ENCODE measurements at regions of chr4 and their contacts with region 1.

Region 1: GRCh38 chr4:86934771-86935565 is at the start of gene AFF1:
- DNase-seq: peak; percentile 95
- ATAC-seq: peak; percentile 68
- H3K4me3 ChIP-seq: peak within 1 kb of the TSS; percentile 73 to 92 (median 83)
- H3K4me3 Mint-ChIP-seq: peak within 1 kb of the TSS; percentile 91
- H3K27ac ChIP-seq: peak within 1 kb of the TSS; percentile 79 to 86
- H3K27ac Mint-ChIP-seq: peak within 1 kb of the TSS; percentile 95
- H3K4me1 ChIP-seq: peaks cover 43 to 50% of the 10 kb centered on the region in 2 donors
- H3K4me1 Mint-ChIP-seq: peaks cover 44% of the 10 kb centered on the region
- H3K27me3 ChIP-seq: no peaks in the 10 kb centered on the region
- H3K27me3 Mint-ChIP-seq: no peaks in the 10 kb centered on the region
- CTCF ChIP-seq: no peak
- total RNA-seq, gene AFF1: 135 and 145 TPM in 2 replicates

Region 2: GRCh38 chr4:86918539-86919072 is 16.4 kb before region 1 on chr4:
- CTCF ChIA-PET with region 1: interaction called, 109 read pairs
- POLR2A ChIA-PET with region 1: interaction called, 6 read pairs
- intact Hi-C with region 1: loop called (anchors 1 kb)
- DNase-seq: no peak
- ATAC-seq: no peak
- H3K4me3 ChIP-seq: no peak overlapping the region
- H3K4me3 Mint-ChIP-seq: no peak overlapping the region
- H3K27ac ChIP-seq: no peak overlapping the region
- H3K27ac Mint-ChIP-seq: no peak overlapping the region
- H3K4me1 ChIP-seq: peaks cover 0 to 2% of the 10 kb centered on the region in 2 donors
- H3K4me1 Mint-ChIP-seq: no peaks in the 10 kb centered on the region
- H3K27me3 ChIP-seq: no peaks in the 10 kb centered on the region
- H3K27me3 Mint-ChIP-seq: no peaks in the 10 kb centered on the region
- CTCF ChIP-seq: no peak

Region 3: DNA sequence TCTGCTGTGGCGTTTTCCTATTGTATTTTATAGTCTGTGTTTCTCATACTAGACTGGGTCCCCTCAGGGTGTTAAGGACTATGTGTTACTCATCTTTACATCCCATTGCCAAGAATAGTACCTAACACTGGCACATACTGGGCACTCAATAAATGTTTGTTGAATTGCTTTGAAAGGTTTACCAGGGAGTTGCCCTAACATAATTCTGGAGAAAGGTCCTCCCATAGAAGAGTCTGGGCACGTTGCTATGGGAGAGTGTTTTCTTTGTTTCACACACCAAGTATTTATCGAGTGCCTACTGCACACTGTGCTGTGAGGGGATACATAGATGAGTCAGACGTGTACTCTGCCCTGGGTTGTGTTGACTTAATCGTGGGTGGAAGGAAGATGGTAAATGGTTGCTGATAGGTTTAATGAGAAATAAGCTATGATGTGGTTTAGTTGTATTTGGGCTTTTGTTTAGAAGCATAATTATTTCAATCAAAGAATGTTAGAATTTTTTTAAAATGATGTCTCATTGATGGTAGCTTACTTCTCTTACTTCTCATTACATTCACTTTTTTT is 42.7 kb after region 1 on chr4:
- CTCF ChIA-PET with region 1: interaction called, 3 read pairs
- POLR2A ChIA-PET with region 1: interaction called, 5 read pairs
- intact Hi-C with region 1: loop called (anchors 5 kb)
- DNase-seq: no peak
- ATAC-seq: no peak
- H3K4me3 ChIP-seq: no peak overlapping the region
- H3K4me3 Mint-ChIP-seq: peak overlapping the region; percentile 1
- H3K27ac ChIP-seq: no peak overlapping the region
- H3K27ac Mint-ChIP-seq: no peak overlapping the region
- H3K4me1 ChIP-seq: peaks cover 35 to 37% of the 10 kb centered on the region in 2 donors
- H3K4me1 Mint-ChIP-seq: peaks cover 49% of the 10 kb centered on the region
- H3K27me3 ChIP-seq: no peaks in the 10 kb centered on the region
- H3K27me3 Mint-ChIP-seq: no peaks in the 10 kb centered on the region
- CTCF ChIP-seq: no peak

Region 4: GRCh38 chr4:87026800-87027495 is 92.0 kb after region 1 on chr4:
- CTCF ChIA-PET with region 1: no interaction called
- POLR2A ChIA-PET with region 1: interaction called, 4 read pairs
- intact Hi-C with region 1: loop called (anchors 2 kb)
- DNase-seq: peak; percentile 82
- ATAC-seq: peak; percentile 96
- H3K4me3 ChIP-seq: no peak overlapping the region
- H3K4me3 Mint-ChIP-seq: peak overlapping the region; percentile 52
- H3K27ac ChIP-seq: peak overlapping the region; percentile 48 to 78
- H3K27ac Mint-ChIP-seq: peak overlapping the region; percentile 80
- H3K4me1 ChIP-seq: peaks cover 40 to 61% of the 10 kb centered on the region in 2 donors
- H3K4me1 Mint-ChIP-seq: peaks cover 52% of the 10 kb centered on the region
- H3K27me3 ChIP-seq: no peaks in the 10 kb centered on the region
- H3K27me3 Mint-ChIP-seq: no peaks in the 10 kb centered on the region
- CTCF ChIP-seq: no peak

Region 5: DNA sequence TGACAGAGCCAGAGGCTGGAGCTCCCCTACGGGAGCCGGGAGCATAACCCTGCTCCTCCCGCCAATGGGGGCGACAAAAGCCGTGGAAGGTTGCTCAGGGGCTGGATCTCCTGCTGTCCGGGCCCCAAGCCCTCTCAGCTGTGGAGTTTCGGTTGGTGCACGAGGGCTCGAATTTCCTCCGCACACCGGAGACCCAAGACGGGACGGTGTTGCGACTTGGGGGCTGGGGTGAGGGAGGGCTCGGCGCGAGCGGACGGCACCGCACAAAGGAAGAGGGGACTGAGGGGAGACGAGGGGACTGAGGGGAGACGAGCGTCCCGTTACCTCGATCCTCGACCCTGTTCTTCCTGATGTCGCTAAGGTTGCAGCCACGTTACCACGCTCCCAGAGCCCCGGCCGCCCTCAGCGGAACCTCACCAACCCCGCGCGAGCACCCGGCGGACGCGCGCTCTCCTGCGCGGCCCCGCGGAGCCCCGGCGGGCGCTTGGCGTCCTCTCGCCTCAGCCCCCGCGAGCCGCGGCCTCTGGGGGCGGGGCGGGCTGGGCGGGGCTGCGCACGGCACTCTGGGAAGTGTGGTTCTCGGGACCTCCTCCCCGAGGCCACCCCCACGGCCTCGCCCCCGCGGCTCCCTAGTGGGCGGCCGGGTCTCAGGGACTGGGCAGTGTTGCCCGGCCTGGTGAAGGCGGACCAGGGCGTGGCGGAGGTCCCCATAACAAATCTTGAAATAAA is 285.3 kb after region 1 on chr4 and contains the start of gene KLHL8:
- CTCF ChIA-PET with region 1: no interaction called
- POLR2A ChIA-PET with region 1: no interaction called
- intact Hi-C with region 1: loop called (anchors 1 kb)
- DNase-seq: peak; percentile 92
- ATAC-seq: peak; percentile 93
- H3K4me3 ChIP-seq: peak within 1 kb of the TSS; percentile 76 to 100 (median 93)
- H3K4me3 Mint-ChIP-seq: peak within 1 kb of the TSS; percentile 98
- H3K27ac ChIP-seq: peak within 1 kb of the TSS; percentile 80 to 85
- H3K27ac Mint-ChIP-seq: peak within 1 kb of the TSS; percentile 96
- H3K4me1 ChIP-seq: peaks cover 7% of the 10 kb centered on the region in 2 donors
- H3K4me1 Mint-ChIP-seq: peaks cover 16% of the 10 kb centered on the region
- H3K27me3 ChIP-seq: no peaks in the 10 kb centered on the region
- H3K27me3 Mint-ChIP-seq: no peaks in the 10 kb centered on the region
- CTCF ChIP-seq: no peak
- total RNA-seq, gene KLHL8: 12.4 and 14.3 TPM in 2 replicates

Region 6: GRCh38 chr4:87377816-87378215 is 442.8 kb after region 1 on chr4:
- CTCF ChIA-PET with region 1: no interaction called
- POLR2A ChIA-PET with region 1: no interaction called
- intact Hi-C with region 1: no loop called
- DNase-seq: no peak
- ATAC-seq: no peak
- H3K4me3 ChIP-seq: no peak overlapping the region
- H3K4me3 Mint-ChIP-seq: no peak overlapping the region
- H3K27ac ChIP-seq: no peak overlapping the region
- H3K27ac Mint-ChIP-seq: no peak overlapping the region
- H3K4me1 ChIP-seq: no peaks in the 10 kb centered on the region
- H3K4me1 Mint-ChIP-seq: peaks cover 3% of the 10 kb centered on the region
- H3K27me3 ChIP-seq: no peaks in the 10 kb centered on the region
- H3K27me3 Mint-ChIP-seq: no peaks in the 10 kb centered on the region
- CTCF ChIP-seq: no peak